ENCODE measurements at regions of chr2 and their contacts with region 1.

Region 1: GRCh38 chr2:121810959-121811853 is 55.8 kb downstream of the TSN start:
- DNase-seq: peak; percentile 20
- H3K4me3 Mint-ChIP-seq: no peak overlapping the region
- H3K27ac Mint-ChIP-seq: no peak overlapping the region
- H3K4me1 Mint-ChIP-seq: no peaks in the 10 kb centered on the region
- H3K27me3 Mint-ChIP-seq: peaks cover 9% of the 10 kb centered on the region

Region 2: DNA sequence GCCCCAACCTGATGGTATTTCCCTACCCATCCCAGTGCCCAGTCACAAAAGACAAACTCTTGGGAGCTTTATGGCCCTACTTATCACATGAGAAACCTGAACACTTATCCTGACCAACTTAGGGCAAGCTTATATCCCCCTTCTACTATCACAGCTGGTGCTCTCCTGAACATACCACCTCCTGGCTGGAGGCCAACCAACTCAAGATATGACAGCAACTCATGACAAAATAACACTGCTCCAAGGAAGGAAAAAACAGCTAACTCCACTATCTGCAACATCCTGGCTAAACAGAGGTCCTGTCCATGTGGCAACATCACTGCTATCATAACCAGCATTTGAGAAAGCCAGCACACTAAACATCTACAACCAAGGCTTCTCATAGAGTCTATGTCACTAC is 141.0 kb before region 1 on chr2:
- CTCF ChIA-PET with region 1: no interaction called
- intact Hi-C with region 1: no loop called
- DNase-seq: no peak
- H3K4me3 Mint-ChIP-seq: no peak overlapping the region
- H3K27ac Mint-ChIP-seq: no peak overlapping the region
- H3K4me1 Mint-ChIP-seq: no peaks in the 10 kb centered on the region
- H3K27me3 Mint-ChIP-seq: peaks cover 2% of the 10 kb centered on the region

Region 3: DNA sequence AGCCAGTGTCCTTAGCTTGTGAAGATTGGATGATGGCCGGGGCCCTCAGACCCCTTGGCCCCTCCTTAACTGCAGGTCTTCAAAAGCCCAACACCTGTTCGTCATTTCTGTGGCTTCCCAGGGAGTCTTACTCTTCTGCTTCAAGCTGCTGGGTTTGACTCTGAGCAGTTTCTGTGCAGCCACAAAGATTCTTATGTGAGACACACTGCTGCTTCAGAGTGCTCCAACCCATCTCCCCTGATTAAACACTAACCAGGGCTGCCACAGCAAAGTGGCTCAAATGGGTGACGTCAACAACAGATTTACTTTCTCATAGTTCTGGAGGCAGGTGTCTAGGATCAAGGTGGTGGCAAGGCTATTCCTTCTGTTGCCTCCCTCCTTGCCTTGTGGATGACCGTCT is 15.0 kb before region 1 on chr2:
- CTCF ChIA-PET with region 1: no interaction called
- intact Hi-C with region 1: no loop called
- DNase-seq: no peak
- H3K4me3 Mint-ChIP-seq: no peak overlapping the region
- H3K27ac Mint-ChIP-seq: no peak overlapping the region
- H3K4me1 Mint-ChIP-seq: no peaks in the 10 kb centered on the region
- H3K27me3 Mint-ChIP-seq: peaks cover 9% of the 10 kb centered on the region

Region 4: GRCh38 chr2:122136056-122136455 is 324.9 kb after region 1 on chr2:
- CTCF ChIA-PET with region 1: no interaction called
- intact Hi-C with region 1: loop called (anchors 1 kb)
- DNase-seq: peak; percentile 37
- H3K4me3 Mint-ChIP-seq: no peak overlapping the region
- H3K27ac Mint-ChIP-seq: no peak overlapping the region
- H3K4me1 Mint-ChIP-seq: no peaks in the 10 kb centered on the region
- H3K27me3 Mint-ChIP-seq: peaks cover 4% of the 10 kb centered on the region

Region 5: DNA sequence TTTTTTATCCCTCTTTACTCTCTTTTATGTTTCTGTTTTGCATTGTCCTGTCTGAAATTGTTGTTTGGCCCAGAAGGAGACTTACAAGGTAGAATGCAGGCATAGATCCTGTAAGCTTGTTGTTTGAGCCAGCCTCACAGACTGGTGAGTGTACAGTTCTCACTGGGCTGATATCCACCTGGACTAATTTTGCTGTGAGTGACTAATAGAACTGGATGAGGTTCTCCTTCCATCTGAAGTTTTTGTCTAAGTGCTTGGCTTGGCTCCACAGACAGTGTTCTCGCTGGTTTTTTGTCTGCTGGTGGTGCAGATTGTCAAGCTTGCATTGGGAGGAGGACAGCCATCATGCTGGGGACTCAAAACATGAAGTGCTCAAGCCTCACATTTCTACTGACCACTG is 440.0 kb after region 1 on chr2:
- CTCF ChIA-PET with region 1: no interaction called
- intact Hi-C with region 1: no loop called
- DNase-seq: no peak
- H3K4me3 Mint-ChIP-seq: no peak overlapping the region
- H3K27ac Mint-ChIP-seq: no peak overlapping the region
- H3K4me1 Mint-ChIP-seq: no peaks in the 10 kb centered on the region
- H3K27me3 Mint-ChIP-seq: peaks cover 1% of the 10 kb centered on the region